GM10248 (cell line): ENCODE measurements at regions of chr7 and their contacts with region 1.

Region 1: GRCh38 chr7:65307651-65308299 is 65.9 kb upstream of the ZNF92 start:
- DNase-seq: peak; percentile 58
- CTCF ChIP-seq: peak; percentile 80

Region 2: GRCh38 chr7:64951250-64951848 is 356.4 kb before region 1 on chr7:
- CTCF ChIA-PET with region 1: interaction called, 34 read pairs
- POLR2A ChIA-PET with region 1: no interaction called
- DNase-seq: peak; percentile 46
- CTCF ChIP-seq: peak; percentile 70

Region 3: GRCh38 chr7:65247491-65247890 is 60.3 kb before region 1 on chr7:
- CTCF ChIA-PET with region 1: interaction called, 10 read pairs
- POLR2A ChIA-PET with region 1: no interaction called
- DNase-seq: no peak
- CTCF ChIP-seq: no peak

Region 4: GRCh38 chr7:65285906-65286864 is 21.6 kb before region 1 on chr7:
- CTCF ChIA-PET with region 1: interaction called, 12 read pairs
- POLR2A ChIA-PET with region 1: no interaction called
- DNase-seq: no peak
- CTCF ChIP-seq: no peak

Region 5: DNA sequence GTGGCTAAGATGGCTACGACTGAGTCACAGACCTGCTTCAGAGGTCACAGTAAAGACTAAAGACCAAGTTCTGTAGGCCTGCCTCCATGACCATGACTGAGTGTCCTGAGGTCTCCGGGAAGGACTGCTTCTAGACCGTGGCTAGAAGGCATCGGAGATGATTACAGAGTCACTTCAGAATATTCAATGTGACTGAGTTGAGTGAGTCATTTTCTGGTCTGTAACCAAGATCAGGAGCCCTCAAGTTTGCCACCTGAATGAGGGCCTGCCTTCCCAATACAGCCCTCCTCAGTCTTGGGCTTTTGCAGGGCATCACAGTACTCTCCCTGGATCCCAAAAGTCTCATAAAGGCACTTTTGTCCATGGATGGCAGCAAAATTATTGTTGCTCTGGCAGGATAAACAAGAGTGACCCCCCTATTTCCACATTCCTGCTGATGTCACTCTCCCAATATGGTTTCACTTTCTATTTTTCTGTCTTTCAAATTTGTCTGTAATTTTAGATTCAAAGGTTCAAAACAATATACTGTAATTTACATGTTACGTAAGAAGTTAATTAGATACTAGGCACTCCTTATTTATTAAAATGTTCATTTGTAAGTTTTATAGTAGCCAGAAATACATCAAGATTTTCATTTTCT is 18.1 kb after region 1 on chr7:
- CTCF ChIA-PET with region 1: interaction called, 16 read pairs
- POLR2A ChIA-PET with region 1: no interaction called
- DNase-seq: no peak
- CTCF ChIP-seq: no peak